Left colon (tissue), 2 donors: ENCODE measurements at regions of chr15 and their contacts with region 1.

Region 1: DNA sequence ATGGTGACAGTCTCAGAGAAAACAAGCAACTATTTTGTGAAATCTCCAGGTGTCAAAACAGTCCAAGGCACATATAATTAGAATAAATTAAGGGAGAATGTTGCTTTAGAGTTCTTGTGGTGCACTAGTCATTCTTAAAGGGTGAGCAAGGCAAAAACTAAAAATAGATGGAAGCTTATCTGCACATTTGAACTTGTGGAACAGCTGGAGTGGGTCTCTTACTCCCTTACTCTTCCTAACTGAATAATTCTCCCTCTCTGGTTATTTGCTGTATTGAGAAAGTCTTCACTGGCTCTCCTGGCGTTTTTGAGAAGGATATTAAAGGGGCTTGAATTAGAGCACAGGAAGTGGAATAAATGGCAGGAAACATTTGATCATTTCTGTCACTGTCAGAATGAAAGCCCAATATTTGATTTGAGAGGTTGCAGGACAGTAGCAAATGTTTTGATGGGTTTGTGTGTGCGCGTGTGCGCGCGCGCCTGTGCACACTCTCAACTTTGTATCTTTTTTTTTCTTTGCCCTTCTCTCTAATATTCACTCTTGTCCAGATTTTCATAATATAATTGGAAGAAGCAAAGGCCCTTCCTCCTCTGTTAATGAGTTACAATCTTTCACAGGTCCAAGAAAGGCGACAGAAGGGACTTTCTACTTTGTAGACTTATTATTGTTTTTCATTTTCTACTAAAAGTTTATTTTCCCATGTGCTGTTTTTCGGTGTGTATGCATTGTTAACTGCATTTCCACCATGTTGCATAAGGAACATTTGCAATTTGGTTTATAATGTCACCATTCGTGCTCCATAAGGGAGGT is 40.9 kb downstream of the AKAP13 start:
- DNase-seq: no peak
- ATAC-seq: peak; percentile 67

Region 2: GRCh38 chr15:85306946-85307708 is 114.2 kb before region 1 on chr15:
- intact Hi-C with region 1: loop called in 1 of 2 experiments (anchors 10 kb)
- DNase-seq: peak in 1 of 2 donors; percentile 62
- ATAC-seq: peak; percentile 48

Region 3: DNA sequence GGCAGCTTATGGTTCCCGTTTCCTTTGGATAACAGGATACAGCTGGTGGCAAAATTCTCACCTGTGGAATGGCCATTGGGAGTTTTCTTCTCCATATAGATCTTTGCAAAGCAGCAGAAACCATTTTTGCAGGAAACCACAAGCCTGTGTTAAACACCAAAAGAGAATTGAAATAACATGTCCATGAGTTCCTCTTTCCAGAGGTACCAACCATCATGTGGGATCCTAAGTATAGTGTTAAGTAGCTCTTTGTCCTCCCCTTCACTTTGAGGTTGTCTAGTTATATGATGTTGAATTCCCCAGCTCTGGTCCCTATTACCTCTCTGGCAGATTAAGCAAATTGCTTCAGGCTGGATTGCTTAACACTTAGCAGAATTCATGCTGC is 54.0 kb after region 1 on chr15:
- intact Hi-C with region 1: loop called in 1 of 2 experiments (anchors 10 kb)
- DNase-seq: no peak
- ATAC-seq: no peak